ENCODE measurements at regions of chr11 and their contacts with region 1.

Region 1: GRCh38 chr11:62671575-62672389 is at the starts of genes LBHD1 and UQCC3:
- DNase-seq: peak; percentile 93
- H3K4me3 Mint-ChIP-seq: peak within 1 kb of the TSS; percentile 94
- H3K27ac Mint-ChIP-seq: peak within 1 kb of the TSS; percentile 98
- H3K4me1 Mint-ChIP-seq: peaks cover 55% of the 10 kb centered on the region
- H3K27me3 Mint-ChIP-seq: no peaks in the 10 kb centered on the region
- total RNA-seq, gene LBHD1: 10.8 to 14.1 TPM
- total RNA-seq, gene UQCC3: 6.0 to 6.2 TPM

Region 2: GRCh38 chr11:62539262-62539904 is 132.4 kb before region 1 on chr11:
- CTCF ChIA-PET with region 1: no interaction called
- POLR2A ChIA-PET with region 1: no interaction called
- intact Hi-C with region 1: no loop called
- DNase-seq: peak; percentile 85
- H3K4me3 Mint-ChIP-seq: peak overlapping the region; percentile 69
- H3K27ac Mint-ChIP-seq: peak overlapping the region; percentile 84
- H3K4me1 Mint-ChIP-seq: peaks cover 66% of the 10 kb centered on the region
- H3K27me3 Mint-ChIP-seq: no peaks in the 10 kb centered on the region

Region 3: GRCh38 chr11:62621567-62622470 is 50.0 kb before region 1 on chr11 and contains the start of gene B3GAT3:
- CTCF ChIA-PET with region 1: interaction called, 11 read pairs
- POLR2A ChIA-PET with region 1: interaction called, 4 read pairs
- intact Hi-C with region 1: no loop called
- DNase-seq: peak; percentile 98
- H3K4me3 Mint-ChIP-seq: peak within 1 kb of the TSS; percentile 97
- H3K27ac Mint-ChIP-seq: peak within 1 kb of the TSS; percentile 96
- H3K4me1 Mint-ChIP-seq: peaks cover 22% of the 10 kb centered on the region
- H3K27me3 Mint-ChIP-seq: no peaks in the 10 kb centered on the region
- total RNA-seq, gene B3GAT3: 67.0 to 70.4 TPM

Region 4: DNA sequence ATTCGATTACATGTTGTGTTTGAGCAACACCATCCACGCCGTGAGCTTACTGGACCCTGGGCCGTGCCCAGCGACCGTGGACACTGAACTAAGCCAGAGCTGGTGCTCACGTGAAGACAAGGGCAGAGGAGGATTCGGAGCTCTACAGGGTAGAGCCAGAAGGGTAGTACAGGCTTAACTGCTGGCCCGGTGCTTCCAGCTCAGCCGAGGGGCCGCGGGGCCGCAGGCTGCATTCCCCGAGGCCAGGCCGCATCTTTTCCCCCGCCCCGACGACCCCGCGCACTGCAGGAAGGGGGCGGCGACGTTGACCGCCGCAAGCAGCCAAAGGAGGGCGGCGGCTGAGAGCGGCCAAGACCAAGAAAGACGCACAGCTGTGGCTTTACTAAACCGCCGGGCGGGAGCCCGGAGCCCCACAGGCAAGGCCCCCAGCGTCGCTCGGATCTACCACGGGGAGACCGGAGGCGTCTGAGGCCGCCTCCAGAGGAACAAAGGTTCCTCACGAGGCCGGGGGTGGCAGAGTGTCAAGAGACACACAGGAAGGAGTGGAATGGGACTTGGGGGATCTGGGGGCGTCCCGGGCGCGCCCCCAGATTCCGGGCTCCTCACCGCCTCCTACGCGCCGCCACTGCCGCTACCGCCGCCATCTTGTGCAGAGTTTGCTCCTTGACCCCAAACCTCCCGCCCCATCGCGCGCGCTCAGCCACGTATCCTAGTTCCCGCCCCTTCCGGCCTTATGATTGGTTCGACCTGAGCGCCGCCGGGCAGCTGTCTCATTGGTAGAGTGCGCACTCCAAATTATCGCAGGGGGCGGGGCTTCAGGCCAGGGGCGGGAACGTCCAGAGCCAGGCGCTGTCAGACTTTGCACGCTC is 25.6 kb before region 1 on chr11 and contains the start of gene GANAB:
- CTCF ChIA-PET with region 1: no interaction called
- POLR2A ChIA-PET with region 1: interaction called, 68 read pairs
- intact Hi-C with region 1: no loop called
- DNase-seq: peak; percentile 100
- H3K4me3 Mint-ChIP-seq: peak within 1 kb of the TSS; percentile 94
- H3K27ac Mint-ChIP-seq: peak within 1 kb of the TSS; percentile 94
- H3K4me1 Mint-ChIP-seq: peaks cover 30% of the 10 kb centered on the region
- H3K27me3 Mint-ChIP-seq: no peaks in the 10 kb centered on the region
- total RNA-seq, gene GANAB: 247 to 249 TPM

Region 5: DNA sequence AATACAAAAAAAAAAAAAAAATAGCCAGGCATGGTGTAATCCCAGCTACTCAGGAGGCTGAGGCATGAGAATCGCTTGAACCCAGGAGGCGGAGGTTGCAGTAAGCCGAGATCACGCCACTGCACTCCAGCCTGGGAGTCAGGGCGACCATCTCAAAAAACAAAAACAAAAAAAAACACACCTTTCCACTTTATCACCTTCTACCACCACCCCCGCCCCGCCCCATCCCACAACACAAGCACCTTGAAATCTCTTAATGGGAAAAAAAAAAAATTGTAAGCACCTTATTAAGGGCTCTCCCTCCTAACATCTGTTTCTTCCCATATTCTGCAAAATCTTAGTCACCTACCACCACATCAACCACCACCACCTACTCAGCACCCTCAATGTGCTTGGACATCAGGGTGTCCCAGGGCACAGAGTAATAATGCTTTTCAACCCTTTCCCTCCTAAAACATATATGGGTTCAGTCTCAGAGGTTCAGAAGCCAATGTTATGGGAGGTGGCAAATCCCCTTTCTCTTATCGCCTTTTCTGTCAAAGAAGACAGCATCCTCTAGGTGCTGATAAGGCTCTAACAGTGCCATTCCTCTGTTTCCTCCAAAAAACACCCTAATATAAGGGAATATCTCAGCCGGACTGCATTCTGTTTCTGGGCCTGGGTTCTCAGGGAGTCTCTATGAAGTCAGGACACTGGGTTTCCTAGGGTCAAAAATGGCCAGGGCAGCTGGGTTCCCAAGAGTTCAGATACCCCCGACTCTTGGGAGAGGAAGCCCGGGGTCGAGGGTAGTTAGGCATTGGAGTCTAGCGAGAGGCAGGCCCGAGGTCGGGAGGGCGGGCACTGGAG is 19.4 kb before region 1 on chr11:
- CTCF ChIA-PET with region 1: interaction called, 5 read pairs
- POLR2A ChIA-PET with region 1: interaction called, 71 read pairs
- intact Hi-C with region 1: loop called (anchors 2 kb)
- DNase-seq: peak; percentile 59
- H3K4me3 Mint-ChIP-seq: peak overlapping the region; percentile 85
- H3K27ac Mint-ChIP-seq: peak overlapping the region; percentile 81
- H3K4me1 Mint-ChIP-seq: peaks cover 22% of the 10 kb centered on the region
- H3K27me3 Mint-ChIP-seq: no peaks in the 10 kb centered on the region

Region 6: DNA sequence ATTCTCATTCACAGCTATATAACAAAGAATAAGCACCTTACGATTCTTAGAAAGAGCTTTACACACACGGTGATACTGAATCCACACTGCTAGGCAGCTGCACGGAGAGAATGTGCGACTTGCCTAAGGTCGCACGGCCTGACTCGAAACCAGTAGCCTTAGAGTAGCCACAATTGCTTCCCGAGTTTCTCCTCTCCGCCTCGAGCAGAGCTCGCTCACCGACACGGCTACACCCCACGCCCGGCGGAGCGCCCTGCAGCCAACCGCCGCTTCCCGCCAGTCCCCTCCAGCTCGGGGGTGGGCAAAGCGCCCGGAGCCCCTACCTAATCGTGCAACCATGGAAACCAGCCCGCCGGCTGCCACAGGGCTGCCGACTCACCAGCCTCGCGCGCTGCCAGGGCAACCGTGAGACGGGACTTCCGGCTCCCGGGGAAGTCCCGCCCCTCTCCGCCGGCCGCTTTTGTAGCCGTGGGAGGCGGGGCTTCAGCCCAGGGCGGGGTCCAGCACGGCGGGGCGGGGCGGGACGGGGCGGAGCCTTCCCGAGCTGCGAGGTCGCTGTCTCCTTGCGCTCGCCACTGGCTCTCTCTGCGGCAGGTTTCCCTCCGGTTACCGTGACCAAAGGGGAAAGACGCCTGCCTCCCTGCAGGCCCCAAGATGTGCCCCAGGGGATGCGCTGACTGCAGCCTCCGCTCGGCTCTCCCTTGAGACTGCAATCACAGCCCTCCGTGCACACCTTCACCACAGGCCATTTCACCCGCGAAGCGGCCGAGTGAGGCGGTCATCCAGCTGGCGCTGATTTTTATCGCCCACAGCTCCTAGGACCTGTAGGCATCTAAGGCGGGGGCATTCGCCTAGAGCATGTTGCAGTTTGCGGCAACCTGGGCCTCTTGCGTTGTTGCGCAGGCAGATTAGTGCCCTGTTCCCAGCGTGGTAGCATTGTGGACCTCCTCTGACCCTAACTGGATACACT is 34.4 kb after region 1 on chr11:
- CTCF ChIA-PET with region 1: no interaction called
- POLR2A ChIA-PET with region 1: interaction called, 13 read pairs
- intact Hi-C with region 1: no loop called
- DNase-seq: peak; percentile 96
- H3K4me3 Mint-ChIP-seq: peak overlapping the region; percentile 85
- H3K27ac Mint-ChIP-seq: peak overlapping the region; percentile 70
- H3K4me1 Mint-ChIP-seq: peaks cover 50% of the 10 kb centered on the region
- H3K27me3 Mint-ChIP-seq: no peaks in the 10 kb centered on the region

Region 7: DNA sequence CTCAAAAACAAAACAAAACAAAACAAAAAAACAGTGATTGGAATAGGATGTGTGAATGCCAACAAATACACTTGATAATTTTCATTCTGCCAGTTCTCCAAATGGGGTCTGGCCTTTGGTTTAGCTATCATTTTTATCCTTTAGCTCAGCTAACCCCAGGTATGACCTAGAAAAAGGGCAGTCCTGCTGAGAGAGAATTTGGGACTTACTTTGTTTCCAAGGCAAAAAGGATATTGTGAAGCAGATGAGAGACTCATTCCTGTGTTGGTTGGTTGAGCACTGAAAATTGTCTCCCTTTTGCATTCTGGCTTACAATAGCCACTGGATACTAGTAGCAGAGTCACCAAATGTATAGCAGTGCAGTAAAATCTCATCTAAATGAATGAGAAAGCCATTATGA is 65.4 kb after region 1 on chr11:
- CTCF ChIA-PET with region 1: no interaction called
- POLR2A ChIA-PET with region 1: no interaction called
- intact Hi-C with region 1: no loop called
- DNase-seq: no peak
- H3K4me3 Mint-ChIP-seq: no peak overlapping the region
- H3K27ac Mint-ChIP-seq: no peak overlapping the region
- H3K4me1 Mint-ChIP-seq: peaks cover 8% of the 10 kb centered on the region
- H3K27me3 Mint-ChIP-seq: no peaks in the 10 kb centered on the region

Measured in activated CD4-positive, alpha-beta memory T cell treated with anti-CD3 and anti-CD28 coated beads for 36 hours (primary cell).